Activated T-helper 1 cell treated with anti-CD3 and anti-CD28 coated beads, Interleukin-12 subunit alpha, Interleukin-12 subunit beta, Interleukin-2, Interleukin-4 antibody, amounts not matched to agents 30 ng/mL and 10 ng/mL and 1 ng/mL, durations not matched to agents 14 hours and 24 hours and 36 hours (primary cell): ENCODE measurements at regions of chr3 and their contacts with region 1.

Region 1: GRCh38 chr3:153026026-153026425 is 136.0 kb upstream of the RAP2B start:
- DNase-seq: no peak
- H3K4me3 Mint-ChIP-seq: no peak overlapping the region
- H3K27ac Mint-ChIP-seq: no peak overlapping the region
- H3K4me1 Mint-ChIP-seq: no peaks in the 10 kb centered on the region
- H3K27me3 Mint-ChIP-seq: peaks cover 4% of the 10 kb centered on the region

Region 2: GRCh38 chr3:153595186-153595815 is 569.3 kb after region 1 on chr3:
- intact Hi-C with region 1: loop called (anchors 5 kb)
- DNase-seq: no peak
- H3K4me3 Mint-ChIP-seq: no peak overlapping the region
- H3K27ac Mint-ChIP-seq: no peak overlapping the region
- H3K4me1 Mint-ChIP-seq: no peaks in the 10 kb centered on the region
- H3K27me3 Mint-ChIP-seq: no peaks in the 10 kb centered on the region

Region 3: GRCh38 chr3:153866901-153867300 is 840.9 kb after region 1 on chr3:
- intact Hi-C with region 1: no loop called
- DNase-seq: no peak
- H3K4me3 Mint-ChIP-seq: no peak overlapping the region
- H3K27ac Mint-ChIP-seq: no peak overlapping the region
- H3K4me1 Mint-ChIP-seq: no peaks in the 10 kb centered on the region
- H3K27me3 Mint-ChIP-seq: peaks cover 3% of the 10 kb centered on the region

Region 4: GRCh38 chr3:154018100-154018696 is 992.2 kb after region 1 on chr3:
- intact Hi-C with region 1: loop called (anchors 1 kb)
- DNase-seq: no peak
- H3K4me3 Mint-ChIP-seq: no peak overlapping the region
- H3K27ac Mint-ChIP-seq: no peak overlapping the region
- H3K4me1 Mint-ChIP-seq: no peaks in the 10 kb centered on the region
- H3K27me3 Mint-ChIP-seq: no peaks in the 10 kb centered on the region

Region 5: DNA sequence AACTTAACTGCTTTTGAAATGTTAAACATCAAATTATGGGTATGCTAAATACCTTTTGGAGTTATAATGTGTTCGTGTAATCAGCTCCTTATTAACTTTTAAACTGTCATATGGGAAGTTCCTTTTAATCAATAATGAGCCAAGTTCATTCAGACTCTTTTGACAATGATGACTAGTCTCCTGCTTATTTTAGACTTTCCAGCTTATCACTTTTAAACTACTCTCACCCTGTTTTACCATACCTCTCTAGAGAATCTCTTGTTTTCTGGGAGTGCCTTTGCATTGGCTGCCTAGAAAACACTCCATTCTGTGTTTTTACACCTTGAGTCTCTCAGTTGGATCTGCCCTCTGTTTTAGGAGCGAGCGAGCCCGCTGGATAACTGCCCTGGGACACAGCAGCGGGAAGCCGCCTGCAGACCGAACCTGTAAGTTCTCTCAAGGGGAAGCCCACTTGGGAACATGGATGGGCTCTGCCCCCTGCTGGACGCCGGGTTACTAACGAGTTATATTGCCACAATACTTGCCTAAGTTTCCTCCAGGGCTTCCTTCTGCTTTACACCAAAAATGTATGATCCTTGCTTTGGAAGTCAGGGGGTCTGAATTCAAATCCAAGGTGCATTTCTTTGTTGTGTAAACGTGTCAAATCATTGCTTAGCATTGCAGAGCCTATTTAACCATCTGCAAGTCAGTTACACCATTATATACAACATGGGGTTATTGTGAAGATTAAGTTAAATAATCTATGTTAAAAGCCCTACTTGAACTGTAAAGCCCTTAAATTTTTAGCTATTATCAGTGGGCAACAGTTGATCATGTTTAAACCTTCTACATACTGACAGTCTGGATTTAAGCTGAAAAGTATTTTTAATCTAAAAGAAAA is 1227.0 kb after region 1 on chr3:
- intact Hi-C with region 1: loop called (anchors 5 kb)
- DNase-seq: peak; percentile 27
- H3K4me3 Mint-ChIP-seq: no peak overlapping the region
- H3K27ac Mint-ChIP-seq: no peak overlapping the region
- H3K4me1 Mint-ChIP-seq: peaks cover 4% of the 10 kb centered on the region
- H3K27me3 Mint-ChIP-seq: no peaks in the 10 kb centered on the region